Motor neuron (in vitro differentiated cells): ENCODE measurements at regions of chr6 and their contacts with region 1.

Region 1: DNA sequence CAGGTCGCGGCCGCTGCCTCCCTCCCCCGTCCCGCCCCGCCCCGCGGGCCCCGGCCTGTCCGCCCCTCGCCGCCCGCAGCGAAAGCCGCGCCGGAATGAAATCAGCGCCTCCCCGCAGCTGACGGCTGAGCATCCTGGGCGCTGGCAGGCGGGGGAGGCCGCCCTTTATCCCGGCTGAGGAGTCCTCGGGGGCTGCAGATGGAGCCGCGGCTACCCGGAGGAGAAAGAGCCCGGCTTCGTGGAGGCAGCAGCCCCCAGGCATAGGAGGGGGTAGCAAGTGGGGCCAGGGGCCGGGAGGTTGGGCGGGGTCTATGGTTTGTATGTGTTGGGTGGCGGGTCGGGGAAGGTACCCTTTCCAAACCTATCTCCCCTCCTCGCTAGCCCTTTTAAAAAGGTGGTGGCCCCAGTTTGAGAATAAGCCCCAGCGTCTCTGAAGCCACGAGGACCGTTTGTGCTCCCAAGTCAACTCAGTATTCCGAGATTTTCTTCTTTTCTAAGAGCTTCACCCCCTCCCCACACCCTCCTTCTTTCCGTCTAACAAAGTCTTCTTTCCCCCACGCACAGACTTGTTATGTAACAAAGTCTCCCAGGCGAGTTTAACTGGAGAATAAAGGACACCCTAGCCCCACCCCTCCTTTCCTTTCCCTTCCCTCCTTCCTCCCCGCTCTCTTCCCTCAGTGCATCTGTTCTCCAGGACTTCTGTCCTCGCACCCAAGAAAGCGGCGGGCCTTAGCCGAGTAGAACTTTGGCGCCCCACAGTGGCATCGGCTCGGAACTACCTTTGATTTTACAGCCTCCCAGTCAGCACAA is 11.0 kb downstream of the POU3F2 start:
- ATAC-seq: peak; percentile 70 to 88 (median 75)
- H3K4me3 ChIP-seq: peak overlapping the region; percentile 49 to 95 (median 57)
- H3K27ac ChIP-seq: peak overlapping the region; percentile 62
- H3K4me1 ChIP-seq: peaks cover 0 to 3% of the 10 kb centered on the region in 2 donors

Region 2: DNA sequence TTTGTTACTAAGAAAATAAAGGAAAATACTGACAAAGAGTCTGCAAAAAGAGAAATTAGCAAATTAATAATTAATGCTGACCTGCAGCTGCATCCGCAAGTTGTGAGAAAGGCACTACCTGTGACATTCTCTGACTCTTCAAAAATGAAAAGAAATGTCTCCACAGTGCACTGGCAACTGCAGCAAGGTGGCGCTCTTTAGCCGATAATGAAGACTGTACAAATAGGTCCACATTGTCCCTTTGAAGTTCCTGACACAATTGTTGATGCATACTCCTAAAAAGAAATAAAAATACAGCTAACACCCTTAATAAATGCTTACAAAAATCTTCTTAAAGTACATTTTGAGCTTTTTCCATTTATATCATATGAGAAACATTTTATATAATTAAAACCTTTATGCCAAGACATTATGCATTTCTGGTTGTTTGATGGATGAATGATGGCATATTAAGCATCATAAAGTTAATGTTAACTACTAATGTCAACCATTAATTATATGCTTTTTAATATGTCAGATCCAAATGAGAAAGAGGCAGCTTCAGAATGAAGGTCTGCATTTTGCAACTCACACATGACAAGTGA is 1658.9 kb before region 1 on chr6:
- in situ Hi-C with region 1: loop called in 1 of 9 experiments (anchors 25 kb)
- ATAC-seq: peak; percentile 63 to 81 (median 75)
- H3K4me3 ChIP-seq: no peak overlapping the region
- H3K27ac ChIP-seq: no peak overlapping the region
- H3K4me1 ChIP-seq: no peaks in the 10 kb centered on the region

Region 3: DNA sequence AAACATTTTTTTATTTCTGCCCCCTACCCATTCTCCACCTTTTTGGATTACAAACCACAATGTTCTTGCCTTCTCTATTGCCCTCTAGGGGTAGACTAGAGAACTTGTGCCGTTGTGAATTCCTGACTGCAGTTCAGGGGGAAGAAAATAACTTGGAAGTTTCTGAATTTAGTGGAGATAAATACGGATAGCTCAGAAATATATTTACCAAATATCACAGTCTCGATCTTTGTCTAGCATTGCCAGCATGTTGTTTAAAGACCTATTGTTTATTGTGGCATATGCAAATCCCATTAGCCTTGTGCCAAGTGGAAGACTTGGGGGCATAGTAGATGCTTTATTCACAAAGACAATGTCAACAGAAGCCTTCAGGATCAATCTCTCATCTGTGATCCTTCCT is 1408.3 kb before region 1 on chr6:
- in situ Hi-C with region 1: loop called in 1 of 9 experiments (anchors 25 kb)
- ATAC-seq: no peak
- H3K4me3 ChIP-seq: no peak overlapping the region
- H3K27ac ChIP-seq: no peak overlapping the region
- H3K4me1 ChIP-seq: peaks cover 7 to 9% of the 10 kb centered on the region in 2 donors

Region 4: DNA sequence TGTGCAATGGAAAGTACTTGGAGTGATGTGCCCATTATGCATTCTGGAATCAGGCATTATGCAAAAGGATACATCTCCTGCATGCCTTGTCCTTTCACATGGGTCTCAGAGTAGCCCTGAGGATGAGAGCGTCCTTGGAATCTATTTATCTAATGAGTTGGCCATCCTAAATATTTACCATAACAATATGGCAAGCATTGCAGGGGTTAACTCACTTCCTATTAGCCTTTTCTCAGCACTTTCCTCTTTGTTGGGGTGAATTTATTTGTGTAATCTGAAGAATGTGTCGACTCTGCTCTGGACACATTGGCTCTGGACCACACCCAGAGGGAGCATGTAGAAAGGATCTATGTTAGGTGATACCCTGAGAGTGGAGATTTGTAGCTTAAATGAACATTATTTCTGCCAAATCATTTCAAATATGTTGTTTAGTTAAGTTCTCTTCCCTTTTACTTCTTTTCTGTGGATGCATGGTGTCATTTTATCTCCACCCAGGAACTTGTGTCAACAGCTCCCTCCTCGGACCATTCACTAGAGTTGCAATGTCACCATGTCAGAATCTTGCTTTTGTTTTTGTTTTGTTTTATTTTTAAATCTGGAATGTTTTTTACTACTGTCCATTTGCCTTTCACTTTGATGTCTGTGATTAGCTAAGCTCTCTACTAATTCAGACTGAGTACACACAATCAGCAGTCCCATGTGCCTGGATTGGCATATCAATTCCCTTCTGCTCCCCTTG is 805.4 kb before region 1 on chr6:
- in situ Hi-C with region 1: loop called in 2 of 9 experiments (anchors 25 kb)
- ATAC-seq: peak in 6 of 8 experiments; percentile 15 to 74 (median 50)
- H3K4me3 ChIP-seq: no peak overlapping the region
- H3K27ac ChIP-seq: no peak overlapping the region
- H3K4me1 ChIP-seq: peaks cover 68 to 75% of the 10 kb centered on the region in 2 donors

Region 5: GRCh38 chr6:98054453-98054852 is 791.0 kb before region 1 on chr6:
- in situ Hi-C with region 1: loop called in 4 of 9 experiments (anchors 25 kb)
- ATAC-seq: peak in 1 of 8 experiments; percentile 47
- H3K4me3 ChIP-seq: no peak overlapping the region
- H3K27ac ChIP-seq: no peak overlapping the region
- H3K4me1 ChIP-seq: peaks cover 7 to 31% of the 10 kb centered on the region in 2 donors

Region 6: DNA sequence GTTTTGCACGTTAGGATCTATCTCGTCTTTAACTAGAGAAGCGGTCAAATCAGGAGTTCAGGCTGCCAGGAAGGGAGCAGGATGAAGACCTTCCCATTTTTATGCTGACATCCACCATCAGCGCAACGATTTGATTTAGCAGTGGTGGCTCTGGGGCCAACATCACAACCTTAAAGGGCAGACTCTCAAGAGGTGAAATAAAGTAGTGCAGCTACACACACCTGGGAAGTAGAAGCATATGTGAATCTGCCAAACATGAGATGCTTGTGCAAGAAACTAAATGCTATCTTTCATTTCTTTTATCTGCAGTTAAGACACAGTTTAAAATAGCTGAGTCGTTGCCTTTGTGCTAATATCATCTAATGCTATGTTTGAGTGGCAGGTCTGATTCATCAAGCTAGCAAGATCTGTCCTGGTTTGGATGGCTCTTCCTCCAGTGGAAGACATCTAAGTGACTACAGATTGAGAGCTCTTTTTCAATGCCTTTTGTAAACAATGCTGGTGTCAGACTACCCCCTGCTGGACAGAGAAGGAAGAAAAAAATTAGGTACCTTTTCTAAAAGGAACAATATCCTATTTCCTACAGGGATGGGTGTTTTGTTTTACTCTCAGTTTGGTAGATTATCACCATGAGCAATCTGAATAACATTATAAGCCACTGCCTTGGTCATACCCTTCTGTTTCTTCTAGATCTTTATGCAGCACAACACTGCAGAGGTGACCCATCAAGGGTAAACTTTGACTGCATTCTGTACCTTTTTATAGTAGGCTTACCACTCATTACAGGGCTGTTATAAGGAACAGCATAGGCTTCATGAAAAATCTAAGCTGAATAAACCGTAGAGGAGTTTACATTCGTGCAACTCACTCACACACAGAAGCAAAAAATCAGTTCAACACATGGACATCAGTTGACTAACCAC is 274.0 kb after region 1 on chr6:
- in situ Hi-C with region 1: loop called in 2 of 9 experiments (anchors 10 to 25 kb)
- ATAC-seq: peak; percentile 50 to 72 (median 62)
- H3K4me3 ChIP-seq: no peak overlapping the region
- H3K27ac ChIP-seq: no peak overlapping the region
- H3K4me1 ChIP-seq: no peaks in the 10 kb centered on the region